ENCODE measurements at regions of chr16 and their contacts with region 1.

Region 1: GRCh38 chr16:4766874-4767628 is at the start of gene ZNF500:
- DNase-seq: peak; percentile 96
- H3K4me3 Mint-ChIP-seq: peak within 1 kb of the TSS; percentile 95
- H3K27ac Mint-ChIP-seq: peak within 1 kb of the TSS; percentile 87
- H3K4me1 Mint-ChIP-seq: peaks cover 20% of the 10 kb centered on the region
- H3K27me3 Mint-ChIP-seq: no peaks in the 10 kb centered on the region
- total RNA-seq, gene ZNF500: 16.6 and 17.4 TPM in 2 replicates

Region 2: DNA sequence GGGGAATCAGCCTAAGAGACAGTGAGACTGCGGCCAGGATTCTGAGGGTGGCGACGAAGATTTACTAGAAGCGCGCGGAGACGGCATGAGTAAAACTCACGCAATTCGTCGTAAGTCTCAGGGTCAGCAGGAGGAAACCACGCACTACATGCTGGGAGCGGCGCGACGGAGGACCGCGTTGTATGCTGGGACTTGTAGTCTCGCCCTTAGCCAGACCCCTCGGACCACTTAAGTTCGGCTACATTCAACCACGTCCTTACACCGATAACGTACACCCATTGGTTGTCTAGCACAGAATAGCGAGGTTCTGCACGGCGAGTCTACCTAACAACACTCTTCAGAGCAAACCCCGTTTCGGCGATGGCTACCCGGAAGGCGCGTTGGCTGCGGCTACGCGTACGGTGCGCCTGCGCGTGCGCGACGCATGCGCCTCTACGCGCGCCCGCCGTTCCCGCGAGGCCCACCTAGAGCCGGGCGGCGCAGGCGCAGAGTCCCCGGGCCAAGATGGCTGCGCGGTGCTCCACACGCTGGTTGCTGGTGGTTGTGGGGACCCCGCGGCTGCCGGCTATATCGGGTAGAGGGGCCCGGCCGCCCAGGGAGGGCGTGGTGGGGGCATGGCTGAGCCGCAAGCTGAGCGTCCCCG is 341.6 kb before region 1 on chr16 and contains the start of gene DNAJA3:
- intact Hi-C with region 1: loop called (anchors 2 kb)
- DNase-seq: peak; percentile 91
- H3K4me3 Mint-ChIP-seq: peak within 1 kb of the TSS; percentile 98
- H3K27ac Mint-ChIP-seq: peak within 1 kb of the TSS; percentile 100
- H3K4me1 Mint-ChIP-seq: peaks cover 31% of the 10 kb centered on the region
- H3K27me3 Mint-ChIP-seq: peaks cover 3% of the 10 kb centered on the region
- total RNA-seq, gene DNAJA3: 103 and 107 TPM in 2 replicates

Region 3: DNA sequence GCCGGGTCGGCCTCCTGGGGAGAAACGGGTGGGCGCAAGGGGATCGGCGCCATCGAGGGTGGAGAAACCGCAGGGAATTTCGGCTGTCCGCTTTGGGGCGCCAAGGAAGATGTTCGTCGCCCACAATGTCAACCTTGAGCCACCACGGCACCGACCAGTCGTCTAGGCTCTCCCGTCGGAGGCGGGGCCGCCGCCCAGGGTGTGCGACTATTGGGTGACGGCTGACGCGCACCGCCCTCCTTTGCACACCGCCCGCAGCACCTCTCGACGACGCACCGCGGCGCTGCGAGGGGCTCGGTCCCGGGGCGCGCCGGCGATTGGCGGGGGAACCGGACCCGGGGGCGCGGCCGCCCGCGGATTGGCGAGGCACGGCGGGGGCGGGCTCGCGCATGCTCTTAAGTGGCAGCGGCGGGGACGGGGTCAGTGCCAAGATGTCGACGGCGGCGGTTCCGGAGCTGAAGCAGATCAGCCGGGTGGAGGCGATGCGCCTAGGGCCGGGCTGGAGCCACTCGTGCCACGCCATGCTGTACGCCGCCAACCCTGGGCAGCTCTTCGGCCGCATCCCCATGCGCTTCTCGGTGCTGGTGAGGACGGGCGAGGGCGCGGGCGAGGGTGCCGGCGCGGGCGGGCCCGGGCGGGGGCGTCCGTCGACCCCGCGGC is 73.6 kb before region 1 on chr16 and contains the start of gene NUDT16L1:
- intact Hi-C with region 1: loop called (anchors 2 kb)
- DNase-seq: peak; percentile 98
- H3K4me3 Mint-ChIP-seq: peak within 1 kb of the TSS; percentile 86
- H3K27ac Mint-ChIP-seq: peak within 1 kb of the TSS; percentile 84
- H3K4me1 Mint-ChIP-seq: no peaks in the 10 kb centered on the region
- H3K27me3 Mint-ChIP-seq: no peaks in the 10 kb centered on the region
- total RNA-seq, gene NUDT16L1: 39.9 and 41.9 TPM in 2 replicates

Region 4: DNA sequence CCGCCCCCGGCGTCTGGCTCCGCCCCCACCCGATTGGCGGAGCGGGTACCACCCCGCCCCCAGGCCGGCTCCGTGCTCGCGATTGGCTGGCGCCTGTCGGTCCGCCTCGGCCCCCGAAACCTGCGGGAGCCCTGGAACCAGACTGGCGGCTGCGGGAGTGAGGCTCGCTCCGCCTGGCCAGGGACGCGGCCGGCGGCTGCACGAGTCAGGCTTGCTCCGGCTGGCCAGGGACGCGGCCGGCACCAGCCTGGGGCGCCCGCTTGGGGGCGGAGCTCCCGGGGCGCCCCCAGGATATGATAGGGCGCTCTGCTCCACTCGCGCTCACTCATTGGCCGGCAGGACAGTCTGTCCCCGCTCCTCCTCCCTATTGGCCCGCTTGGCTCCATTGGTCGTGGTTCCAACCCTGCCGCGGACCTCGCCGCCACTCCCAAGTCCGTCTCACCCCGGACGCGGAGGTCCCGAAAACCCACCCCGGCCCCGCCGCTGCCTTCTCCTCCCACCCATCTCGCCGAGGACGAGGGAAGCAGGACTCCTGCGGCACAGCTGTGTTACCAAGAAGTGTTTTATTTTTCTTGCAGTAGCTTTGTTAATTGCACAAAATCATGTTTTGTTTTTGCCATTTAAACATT is 35.7 kb after region 1 on chr16:
- intact Hi-C with region 1: loop called (anchors 1 kb)
- DNase-seq: peak; percentile 89
- H3K4me3 Mint-ChIP-seq: peak overlapping the region; percentile 80
- H3K27ac Mint-ChIP-seq: no peak overlapping the region
- H3K4me1 Mint-ChIP-seq: peaks cover 9% of the 10 kb centered on the region
- H3K27me3 Mint-ChIP-seq: no peaks in the 10 kb centered on the region

Region 5: DNA sequence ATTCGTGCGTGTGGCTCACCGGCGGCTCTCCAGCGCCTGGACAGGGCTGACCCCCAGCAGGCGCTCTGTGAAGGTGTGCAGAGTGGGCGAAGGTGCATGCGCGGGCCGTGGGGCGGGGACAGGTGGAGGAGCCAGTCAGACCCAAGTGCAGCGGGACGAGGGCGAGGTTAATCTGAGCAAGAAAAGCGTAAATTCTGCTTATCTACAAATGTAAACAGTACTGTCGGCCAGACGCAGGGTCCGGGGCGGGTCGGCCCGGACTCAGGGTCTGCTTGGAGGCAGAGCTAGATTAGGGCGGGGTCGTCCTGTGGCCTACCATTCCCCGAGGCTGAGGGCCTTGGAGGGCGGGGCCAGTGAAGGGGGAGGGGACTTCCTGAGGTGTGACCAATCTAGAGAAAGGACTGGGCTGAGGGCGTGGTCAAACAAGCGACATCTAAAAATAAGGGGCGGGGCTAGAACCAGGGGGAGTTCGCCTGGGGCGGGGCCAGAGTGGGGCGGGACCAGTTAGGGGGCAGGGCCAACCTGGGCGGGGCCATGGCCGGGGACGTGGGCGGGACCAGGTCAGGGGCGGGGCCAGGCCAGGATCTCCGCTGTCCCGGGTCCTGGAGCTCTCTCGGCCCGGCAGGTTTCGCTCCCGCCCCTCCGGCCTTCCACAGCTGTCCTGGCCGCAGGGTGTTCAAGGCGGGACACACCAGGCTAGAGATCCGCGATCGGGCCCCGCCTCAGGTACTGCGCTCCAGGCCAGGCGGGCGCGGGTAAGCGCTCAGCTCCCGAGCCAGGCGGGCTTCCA is 190.9 kb after region 1 on chr16 and contains the start of gene SEC14L5:
- intact Hi-C with region 1: loop called (anchors 1 kb)
- DNase-seq: peak; percentile 90
- H3K4me3 Mint-ChIP-seq: peak within 1 kb of the TSS; percentile 85
- H3K27ac Mint-ChIP-seq: peak within 1 kb of the TSS; percentile 26
- H3K4me1 Mint-ChIP-seq: peaks cover 22% of the 10 kb centered on the region
- H3K27me3 Mint-ChIP-seq: peaks cover 21% of the 10 kb centered on the region
- total RNA-seq, gene SEC14L5: not detected in 2 replicates

Region 6: DNA sequence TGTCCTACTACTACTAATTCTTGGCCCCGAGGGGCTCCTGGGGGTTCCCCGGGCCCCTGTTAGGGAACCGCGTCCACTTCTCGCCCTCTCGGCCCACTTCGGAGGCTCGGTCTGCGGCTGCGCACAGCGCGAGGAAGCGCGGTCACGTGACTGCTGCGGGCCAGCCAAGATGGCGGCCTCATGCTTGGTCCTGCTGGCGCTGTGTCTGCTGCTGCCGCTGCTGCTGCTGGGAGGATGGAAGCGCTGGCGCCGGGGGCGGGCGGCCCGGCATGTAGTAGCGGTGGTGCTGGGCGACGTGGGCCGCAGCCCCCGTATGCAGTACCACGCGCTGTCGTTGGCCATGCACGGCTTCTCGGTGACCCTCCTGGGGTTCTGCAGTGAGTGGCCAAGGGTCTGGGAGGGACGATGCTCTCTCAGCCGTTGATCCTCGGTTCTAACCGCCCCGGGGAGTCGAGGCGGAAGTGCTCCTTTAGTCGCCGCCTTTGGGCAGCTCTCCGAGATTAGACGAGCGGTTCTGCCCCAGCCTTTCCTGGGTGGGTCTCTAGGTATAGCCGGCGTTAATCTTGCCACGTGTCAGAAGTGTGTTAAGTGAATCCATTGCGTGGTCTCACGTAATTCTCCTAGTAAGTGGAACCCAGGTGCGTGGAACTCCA is 304.8 kb after region 1 on chr16 and contains the start of gene ALG1:
- intact Hi-C with region 1: loop called (anchors 5 kb)
- DNase-seq: peak; percentile 88
- H3K4me3 Mint-ChIP-seq: peak within 1 kb of the TSS; percentile 93
- H3K27ac Mint-ChIP-seq: peak within 1 kb of the TSS; percentile 97
- H3K4me1 Mint-ChIP-seq: peaks cover 24% of the 10 kb centered on the region
- H3K27me3 Mint-ChIP-seq: peaks cover 6% of the 10 kb centered on the region
- total RNA-seq, gene ALG1: 40.0 and 41.4 TPM in 2 replicates

Region 7: GRCh38 chr16:5108505-5109158 is 341.6 kb after region 1 on chr16:
- intact Hi-C with region 1: no loop called
- DNase-seq: no peak
- H3K4me3 Mint-ChIP-seq: no peak overlapping the region
- H3K27ac Mint-ChIP-seq: no peak overlapping the region
- H3K4me1 Mint-ChIP-seq: no peaks in the 10 kb centered on the region
- H3K27me3 Mint-ChIP-seq: peaks cover 4% of the 10 kb centered on the region

Measured in activated T-helper 1 cell treated with anti-CD3 and anti-CD28 coated beads, Interleukin-12 subunit alpha, Interleukin-12 subunit beta, Interleukin-2, Interleukin-4 antibody, amounts not matched to agents 30 ng/mL and 10 ng/mL and 1 ng/mL, durations not matched to agents 14 hours and 24 hours and 36 hours (primary cell).